HepG2 (cell line): ENCODE measurements at regions of chr17 and their contacts with region 1.

Region 1: DNA sequence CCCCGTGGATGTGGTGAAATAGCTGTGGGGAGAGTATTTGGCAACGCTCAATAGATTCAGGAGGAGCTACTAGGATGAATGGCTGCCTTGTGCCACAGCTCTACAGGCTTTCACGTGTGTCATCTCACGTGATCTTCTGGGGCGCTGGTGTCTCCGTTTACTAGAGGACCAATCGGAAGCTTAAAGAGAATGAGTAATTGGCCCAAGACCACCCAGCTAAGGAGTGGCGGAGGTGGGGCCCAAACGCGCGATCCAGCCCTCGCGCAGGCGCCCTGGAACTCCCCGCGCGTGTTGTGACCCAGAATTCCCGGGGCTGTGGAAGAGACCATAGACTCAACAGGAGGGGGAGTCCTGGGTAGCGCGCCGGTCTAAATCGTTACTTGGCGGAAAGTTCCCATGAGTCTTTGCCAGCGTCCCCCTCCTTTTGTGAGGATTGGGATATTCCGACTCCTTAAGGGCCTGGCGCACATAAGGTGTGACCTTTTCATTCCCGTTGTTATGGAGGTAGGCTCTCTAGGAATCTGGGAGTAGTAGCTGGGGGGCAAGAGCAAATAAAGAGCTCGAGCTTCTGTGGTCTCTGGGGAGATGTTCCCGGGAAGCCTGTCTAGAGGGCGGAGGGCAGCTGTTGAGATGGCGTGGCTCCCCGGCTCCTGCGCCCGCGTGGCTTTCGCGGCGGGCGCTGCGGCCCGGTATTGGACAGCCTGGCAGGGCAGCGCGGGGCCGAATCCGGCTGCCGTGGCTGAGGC is 23.4 kb downstream of the TRPV2 start:
- DNase-seq: peak; percentile 100
- ATAC-seq: peak; percentile 77
- H3K4me3 ChIP-seq: peak overlapping the region; percentile 91 to 94 (median 93)
- H3K27ac ChIP-seq: peak overlapping the region; percentile 93
- H3K4me1 ChIP-seq: peaks cover 78% of the 10 kb centered on the region
- H3K27me3 ChIP-seq: no peaks in the 10 kb centered on the region; a peak in 1 of 5 replicates
- CTCF ChIP-seq: no peak
- EP300 ChIP-seq: peak; percentile 46 to 52; a peak in 3 of 4 replicates
- POLR2A ChIP-seq: peak; percentile 93 to 99
- RAD21 ChIP-seq: no peak

Region 2: GRCh38 chr17:16297367-16298139 is 141.2 kb before region 1 on chr17:
- CTCF ChIA-PET with region 1: no interaction called
- POLR2A ChIA-PET with region 1: interaction called, 25 read pairs
- in situ Hi-C with region 1: no loop called
- intact Hi-C with region 1: no loop called
- DNase-seq: peak; percentile 86
- ATAC-seq: peak; percentile 77
- H3K4me3 ChIP-seq: peak overlapping the region in 2 of 3 experiments; percentile 17 to 42; a peak in 4 of 6 replicates
- H3K27ac ChIP-seq: peak overlapping the region; percentile 97
- H3K4me1 ChIP-seq: peaks cover 78% of the 10 kb centered on the region
- H3K27me3 ChIP-seq: no peaks in the 10 kb centered on the region
- CTCF ChIP-seq: peak; percentile 33; the same call in 1 of the 2 replicates
- EP300 ChIP-seq: peak in 1 of 2 experiments; percentile 38; a peak in 1 of 4 replicates
- POLR2A ChIP-seq: peak; percentile 24 to 75; a peak in 3 of 4 replicates
- RAD21 ChIP-seq: no peak

Region 3: DNA sequence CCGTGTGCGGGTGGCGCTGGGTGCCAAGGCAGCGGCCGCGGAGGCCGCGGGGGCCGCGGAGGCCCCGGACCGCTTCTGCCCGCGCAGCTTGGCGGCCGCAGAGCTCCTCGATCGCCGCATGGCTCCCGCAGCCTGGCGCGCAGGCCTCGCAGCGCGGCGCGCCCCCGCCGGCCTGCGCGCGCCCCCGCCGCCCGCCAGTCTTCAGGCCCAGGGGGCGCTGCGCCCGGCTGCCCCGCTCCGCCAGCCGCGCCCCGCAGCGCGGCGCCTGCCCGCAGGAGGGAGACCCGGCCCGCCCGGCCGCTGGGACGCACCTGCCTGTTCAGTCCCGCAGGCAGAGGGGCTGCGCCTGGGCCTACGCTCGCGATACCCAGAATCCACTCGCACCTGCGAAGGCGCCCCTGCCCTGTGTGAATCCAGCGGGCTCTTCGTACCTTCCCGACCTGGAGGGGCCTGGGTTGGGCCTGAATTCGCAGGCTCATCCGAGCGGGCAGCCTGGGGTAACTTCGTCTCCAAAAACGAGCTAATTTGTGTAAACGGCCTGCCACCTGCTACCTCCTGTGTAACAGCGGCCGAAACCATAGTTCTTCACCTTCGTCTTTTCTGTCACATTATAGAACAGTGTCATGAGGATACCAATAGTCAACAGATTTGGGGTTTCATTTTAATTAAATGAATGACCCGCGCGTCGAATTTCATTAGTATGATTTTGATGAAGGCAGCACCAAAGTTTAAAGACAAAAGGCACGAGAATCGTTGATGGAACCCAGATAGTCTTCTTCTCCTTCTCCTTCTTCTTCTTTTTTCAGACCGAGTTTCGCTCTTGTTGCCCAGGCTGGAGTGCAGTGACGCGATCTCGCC is 85.2 kb before region 1 on chr17 and contains the start of gene CENPV:
- CTCF ChIA-PET with region 1: no interaction called
- POLR2A ChIA-PET with region 1: interaction called, 17 read pairs
- in situ Hi-C with region 1: no loop called
- intact Hi-C with region 1: no loop called
- DNase-seq: peak; percentile 69
- ATAC-seq: peak; percentile 91
- H3K4me3 ChIP-seq: peak within 1 kb of the TSS; percentile 85 to 89 (median 87)
- H3K27ac ChIP-seq: peak within 1 kb of the TSS; percentile 94
- H3K4me1 ChIP-seq: peaks cover 35% of the 10 kb centered on the region
- H3K27me3 ChIP-seq: no peaks in the 10 kb centered on the region
- CTCF ChIP-seq: peak; percentile 49
- EP300 ChIP-seq: no peak
- POLR2A ChIP-seq: peak; percentile 53 to 76; a peak in 3 of 4 replicates
- RAD21 ChIP-seq: peak; percentile 72
- total RNA-seq, gene CENPV: 216 and 292 TPM in 2 replicates

Region 4: DNA sequence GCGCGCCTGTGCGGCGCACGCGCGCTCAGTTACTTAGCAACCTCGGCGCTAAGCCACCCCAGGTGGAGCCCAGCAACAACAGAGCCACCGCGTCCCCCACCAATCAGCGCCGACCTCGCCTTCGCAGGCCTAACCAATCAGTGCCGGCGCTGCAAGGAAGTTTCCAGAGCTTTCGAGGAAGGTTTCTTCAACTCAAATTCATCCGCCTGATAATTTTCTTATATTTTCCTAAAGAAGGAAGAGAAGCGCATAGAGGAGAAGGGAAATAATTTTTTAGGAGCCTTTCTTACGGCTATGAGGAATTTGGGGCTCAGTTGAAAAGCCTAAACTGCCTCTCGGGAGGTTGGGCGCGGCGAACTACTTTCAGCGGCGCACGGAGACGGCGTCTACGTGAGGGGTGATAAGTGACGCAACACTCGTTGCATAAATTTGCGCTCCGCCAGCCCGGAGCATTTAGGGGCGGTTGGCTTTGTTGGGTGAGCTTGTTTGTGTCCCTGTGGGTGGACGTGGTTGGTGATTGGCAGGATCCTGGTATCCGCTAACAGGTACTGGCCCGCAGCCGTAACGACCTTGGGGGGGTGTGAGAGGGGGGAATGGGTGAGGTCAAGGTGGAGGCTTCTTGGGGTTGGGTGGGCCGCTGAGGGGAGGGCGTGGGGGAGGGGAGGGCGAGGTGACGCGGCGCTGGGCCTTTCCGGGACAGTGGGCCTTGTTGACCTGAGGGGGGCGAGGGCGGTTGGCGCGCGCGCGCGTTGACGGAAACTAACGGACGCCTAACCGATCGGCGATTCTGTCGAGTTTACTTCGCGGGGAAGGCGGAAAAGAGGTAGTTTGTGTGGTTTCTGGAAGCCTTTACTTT is 57.9 kb before region 1 on chr17 and contains the start of gene UBB:
- CTCF ChIA-PET with region 1: no interaction called
- POLR2A ChIA-PET with region 1: interaction called, 45 read pairs
- in situ Hi-C with region 1: no loop called
- intact Hi-C with region 1: no loop called
- DNase-seq: peak; percentile 94
- ATAC-seq: peak; percentile 90
- H3K4me3 ChIP-seq: peak within 1 kb of the TSS; percentile 77 to 97 (median 86)
- H3K27ac ChIP-seq: peak within 1 kb of the TSS; percentile 92
- H3K4me1 ChIP-seq: peaks cover 66% of the 10 kb centered on the region
- H3K27me3 ChIP-seq: no peaks in the 10 kb centered on the region; a peak in 1 of 5 replicates
- CTCF ChIP-seq: peak; percentile 52
- EP300 ChIP-seq: peak in 1 of 2 experiments; percentile 79; a peak in 3 of 4 replicates
- POLR2A ChIP-seq: peak; percentile 98 to 99
- RAD21 ChIP-seq: no peak
- total RNA-seq, gene UBB: 2,066 and 2,598 TPM in 2 replicates

Region 5: GRCh38 chr17:16415031-16415924 is 23.5 kb before region 1 on chr17 and contains the start of gene TRPV2:
- CTCF ChIA-PET with region 1: no interaction called
- POLR2A ChIA-PET with region 1: interaction called, 48 read pairs
- in situ Hi-C with region 1: no loop called
- intact Hi-C with region 1: no loop called
- DNase-seq: peak; percentile 59
- ATAC-seq: peak; percentile 84
- H3K4me3 ChIP-seq: peak within 1 kb of the TSS; percentile 62 to 78 (median 74)
- H3K27ac ChIP-seq: peak within 1 kb of the TSS; percentile 64
- H3K4me1 ChIP-seq: peaks cover 53% of the 10 kb centered on the region
- H3K27me3 ChIP-seq: no peaks in the 10 kb centered on the region
- CTCF ChIP-seq: peak; percentile 90
- EP300 ChIP-seq: no peak
- POLR2A ChIP-seq: 0 out of 4 replicates have a peak, but pooled peaks of 1 of the 2 experiments have one; percentile 35
- RAD21 ChIP-seq: peak; percentile 79
- total RNA-seq, gene TRPV2: 7.3 and 13.6 TPM in 2 replicates

Region 6: GRCh38 chr17:16456742-16457316 is 18.1 kb after region 1 on chr17:
- CTCF ChIA-PET with region 1: no interaction called
- POLR2A ChIA-PET with region 1: interaction called, 19 read pairs
- in situ Hi-C with region 1: no loop called
- intact Hi-C with region 1: no loop called
- DNase-seq: no peak
- ATAC-seq: 0 out of 3 replicates have a peak, but pooled peaks have one; percentile 5
- H3K4me3 ChIP-seq: no peak overlapping the region
- H3K27ac ChIP-seq: no peak overlapping the region
- H3K4me1 ChIP-seq: peaks cover 31% of the 10 kb centered on the region
- H3K27me3 ChIP-seq: no peaks in the 10 kb centered on the region
- CTCF ChIP-seq: peak; percentile 48; the same call in 1 of the 2 replicates
- EP300 ChIP-seq: no peak
- POLR2A ChIP-seq: no peak
- RAD21 ChIP-seq: no peak

Region 7: GRCh38 chr17:16537130-16537458 is 98.4 kb after region 1 on chr17:
- CTCF ChIA-PET with region 1: no interaction called
- POLR2A ChIA-PET with region 1: interaction called, 30 read pairs
- in situ Hi-C with region 1: no loop called
- intact Hi-C with region 1: no loop called
- DNase-seq: no peak
- ATAC-seq: no peak
- H3K4me3 ChIP-seq: peak overlapping the region in 1 of 3 experiments; percentile 86; a peak in 2 of 6 replicates
- H3K27ac ChIP-seq: no peak overlapping the region
- H3K4me1 ChIP-seq: peaks cover 11% of the 10 kb centered on the region
- H3K27me3 ChIP-seq: no peaks in the 10 kb centered on the region
- CTCF ChIP-seq: no peak
- EP300 ChIP-seq: no peak
- POLR2A ChIP-seq: no peak
- RAD21 ChIP-seq: no peak